Naive thymus-derived CD4-positive, alpha-beta T cell (primary cell): ENCODE measurements at regions of chr7 and their contacts with region 1.

Region 1: GRCh38 chr7:156892821-156893706 is at the start of gene LMBR1:
- DNase-seq: peak; percentile 90 to 96 (median 93)
- ATAC-seq: peak; percentile 93
- H3K4me3 ChIP-seq: peak within 1 kb of the TSS; percentile 98
- H3K4me3 Mint-ChIP-seq: peak within 1 kb of the TSS; percentile 88 to 96 (median 92)
- H3K27ac ChIP-seq: peak within 1 kb of the TSS; percentile 91
- H3K27ac Mint-ChIP-seq: peak within 1 kb of the TSS; percentile 75 to 95 (median 92)
- H3K4me1 ChIP-seq: peaks cover 7 to 11% of the 10 kb centered on the region in 2 donors
- H3K4me1 Mint-ChIP-seq: peaks cover 19 to 52% (median 45%) of the 10 kb centered on the region in 7 donors
- H3K27me3 ChIP-seq: no peaks in the 10 kb centered on the region
- H3K27me3 Mint-ChIP-seq: no peaks in the 10 kb centered on the region
- total RNA-seq, gene LMBR1: 56.0 to 101 (median 69.0) TPM

Region 2: GRCh38 chr7:155003376-155004214 is 1889.5 kb before region 1 on chr7:
- CTCF ChIA-PET with region 1: no interaction called
- POLR2A ChIA-PET with region 1: no interaction called
- intact Hi-C with region 1: loop called in 1 of 2 experiments (anchors 2 kb)
- DNase-seq: peak in 8 of 9 donors; percentile 74 to 93 (median 86)
- ATAC-seq: peak; percentile 93
- H3K4me3 ChIP-seq: peak overlapping the region; percentile 68
- H3K4me3 Mint-ChIP-seq: peak overlapping the region; percentile 91 to 98 (median 94)
- H3K27ac ChIP-seq: peak overlapping the region; percentile 93
- H3K27ac Mint-ChIP-seq: peak overlapping the region; percentile 89 to 96 (median 94)
- H3K4me1 ChIP-seq: peaks cover 0 to 6% of the 10 kb centered on the region in 2 donors
- H3K4me1 Mint-ChIP-seq: peaks cover 12 to 25% (median 16%) of the 10 kb centered on the region in 7 donors
- H3K27me3 ChIP-seq: no peaks in the 10 kb centered on the region
- H3K27me3 Mint-ChIP-seq: no peaks in the 10 kb centered on the region

Region 3: GRCh38 chr7:156640257-156640948 is 252.7 kb before region 1 on chr7 and contains the start of gene RNF32:
- CTCF ChIA-PET with region 1: no interaction called
- POLR2A ChIA-PET with region 1: interaction called, 3 read pairs
- intact Hi-C with region 1: loop called in 1 of 2 experiments (anchors 1 kb)
- DNase-seq: peak; percentile 72 to 100 (median 81)
- ATAC-seq: peak; percentile 88
- H3K4me3 ChIP-seq: peak within 1 kb of the TSS; percentile 77
- H3K4me3 Mint-ChIP-seq: peak within 1 kb of the TSS; percentile 78 to 98 (median 87)
- H3K27ac ChIP-seq: peak within 1 kb of the TSS; percentile 67
- H3K27ac Mint-ChIP-seq: peak within 1 kb of the TSS in 8 of 9 donors; percentile 50 to 100 (median 84)
- H3K4me1 ChIP-seq: peaks cover 6% of the 10 kb centered on the region in 2 donors
- H3K4me1 Mint-ChIP-seq: peaks cover 7 to 48% (median 17%) of the 10 kb centered on the region in 7 donors
- H3K27me3 ChIP-seq: no peaks in the 10 kb centered on the region
- H3K27me3 Mint-ChIP-seq: peaks cover 12 to 65% (median 42%) of the 10 kb centered on the region in 5 donors
- total RNA-seq, gene RNF32: 0.81 to 2.1 (median 0.99) TPM in 4 of 5 experiments, not detected in the other

Region 4: GRCh38 chr7:156903232-156903909 is 10.3 kb after region 1 on chr7:
- CTCF ChIA-PET with region 1: no interaction called
- POLR2A ChIA-PET with region 1: interaction called, 7 read pairs
- intact Hi-C with region 1: loop called in 1 of 2 experiments (anchors 2 kb)
- DNase-seq: peak in 6 of 9 donors; percentile 12 to 43 (median 28)
- ATAC-seq: peak; percentile 46
- H3K4me3 ChIP-seq: no peak overlapping the region
- H3K4me3 Mint-ChIP-seq: peak overlapping the region in 9 of 10 donors; percentile 1 to 59 (median 51)
- H3K27ac ChIP-seq: no peak overlapping the region
- H3K27ac Mint-ChIP-seq: peak overlapping the region; percentile 22 to 56 (median 44)
- H3K4me1 ChIP-seq: peaks cover 0 to 11% of the 10 kb centered on the region in 2 donors
- H3K4me1 Mint-ChIP-seq: peaks cover 7 to 13% (median 10%) of the 10 kb centered on the region in 7 donors
- H3K27me3 ChIP-seq: peaks cover 0 to 2% of the 10 kb centered on the region in 2 donors
- H3K27me3 Mint-ChIP-seq: peaks cover 0 to 5% (median 0%) of the 10 kb centered on the region in 5 donors

Region 5: GRCh38 chr7:157138424-157139110 is 245.5 kb after region 1 on chr7 and contains the start of gene UBE3C:
- CTCF ChIA-PET with region 1: no interaction called
- POLR2A ChIA-PET with region 1: interaction called, 3 read pairs
- intact Hi-C with region 1: loop called (anchors 1 kb)
- DNase-seq: peak; percentile 88 to 96 (median 93)
- ATAC-seq: peak; percentile 91
- H3K4me3 ChIP-seq: peak within 1 kb of the TSS; percentile 82
- H3K4me3 Mint-ChIP-seq: peak within 1 kb of the TSS; percentile 77 to 93 (median 84)
- H3K27ac ChIP-seq: peak within 1 kb of the TSS; percentile 92
- H3K27ac Mint-ChIP-seq: peak within 1 kb of the TSS; percentile 76 to 99 (median 93)
- H3K4me1 ChIP-seq: peaks cover 35 to 43% of the 10 kb centered on the region in 2 donors
- H3K4me1 Mint-ChIP-seq: peaks cover 26 to 45% (median 42%) of the 10 kb centered on the region in 7 donors
- H3K27me3 ChIP-seq: no peaks in the 10 kb centered on the region
- H3K27me3 Mint-ChIP-seq: peaks cover 0 to 2% (median 0%) of the 10 kb centered on the region in 5 donors
- total RNA-seq, gene UBE3C: 41.6 to 64.6 (median 54.9) TPM

Region 6: GRCh38 chr7:158704704-158705468 is 1811.8 kb after region 1 on chr7 and contains the start of gene NCAPG2:
- CTCF ChIA-PET with region 1: no interaction called
- POLR2A ChIA-PET with region 1: no interaction called
- intact Hi-C with region 1: loop called in 1 of 2 experiments (anchors 10 kb)
- DNase-seq: peak; percentile 94 to 98 (median 97)
- ATAC-seq: peak; percentile 99
- H3K4me3 ChIP-seq: peak within 1 kb of the TSS; percentile 88
- H3K4me3 Mint-ChIP-seq: peak within 1 kb of the TSS; percentile 66 to 88 (median 85)
- H3K27ac ChIP-seq: peak within 1 kb of the TSS; percentile 82
- H3K27ac Mint-ChIP-seq: peak within 1 kb of the TSS; percentile 46 to 91 (median 81)
- H3K4me1 ChIP-seq: peaks cover 12 to 15% of the 10 kb centered on the region in 2 donors
- H3K4me1 Mint-ChIP-seq: peaks cover 11 to 45% (median 15%) of the 10 kb centered on the region in 7 donors
- H3K27me3 ChIP-seq: no peaks in the 10 kb centered on the region
- H3K27me3 Mint-ChIP-seq: no peaks in the 10 kb centered on the region
- total RNA-seq, gene NCAPG2: 6.0 to 88.7 (median 8.8) TPM